Heart left ventricle (tissue), 16 donors: ENCODE measurements at regions of chr7 and their contacts with region 1.

Region 1: GRCh38 chr7:150962553-150963399 is 15.3 kb downstream of the KCNH2 start:
- DNase-seq: peak; percentile 69 to 82 (median 73)
- ATAC-seq: peak; percentile 15 to 64 (median 52)
- H3K4me3 ChIP-seq: no peak overlapping the region
- H3K27ac ChIP-seq: peak overlapping the region; percentile 70 to 96 (median 88)
- H3K4me1 ChIP-seq: peaks cover 0 to 93% (median 34%) of the 10 kb centered on the region in 12 donors
- H3K27me3 ChIP-seq: peaks cover 0 to 40% (median 3%) of the 10 kb centered on the region in 9 donors
- CTCF ChIP-seq: peak; percentile 73 to 90 (median 83)
- POLR2A ChIP-seq: no peak

Region 2: DNA sequence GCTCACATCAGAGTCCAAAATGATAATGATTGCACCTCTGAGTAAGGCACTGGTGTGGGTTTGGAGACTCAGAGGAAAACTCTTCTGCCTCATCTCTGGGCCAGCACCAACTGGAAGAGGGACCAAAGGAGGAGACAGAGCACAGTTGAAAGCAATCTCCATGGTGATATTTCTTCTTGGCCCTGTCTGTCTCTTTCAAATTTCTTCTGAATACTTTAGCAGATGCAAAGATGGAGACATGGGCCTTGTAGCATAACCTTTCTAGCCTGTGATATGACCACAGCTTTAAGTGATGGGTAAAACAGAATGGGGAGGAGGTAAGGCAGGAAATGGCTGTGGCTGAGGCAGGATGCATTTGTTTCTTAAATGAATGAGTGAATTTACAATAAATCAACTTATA is 460.3 kb before region 1 on chr7:
- intact Hi-C with region 1: no loop called
- DNase-seq: no peak
- ATAC-seq: no peak
- H3K4me3 ChIP-seq: no peak overlapping the region
- H3K27ac ChIP-seq: peak overlapping the region in 1 of 12 donors; percentile 61
- H3K4me1 ChIP-seq: peaks cover 0 to 32% (median 8%) of the 10 kb centered on the region in 12 donors
- H3K27me3 ChIP-seq: no peaks in the 10 kb centered on the region
- CTCF ChIP-seq: no peak
- POLR2A ChIP-seq: no peak

Region 3: GRCh38 chr7:150898475-150899011 is 64.2 kb before region 1 on chr7:
- intact Hi-C with region 1: loop called in 5 of 10 experiments (anchors 2 to 10 kb)
- DNase-seq: peak; percentile 67 to 90 (median 80)
- ATAC-seq: peak in 3 of 4 donors; percentile 64 to 80 (median 74)
- H3K4me3 ChIP-seq: no peak overlapping the region
- H3K27ac ChIP-seq: no peak overlapping the region
- H3K4me1 ChIP-seq: peaks cover 0 to 33% (median 4%) of the 10 kb centered on the region in 12 donors
- H3K27me3 ChIP-seq: peaks cover 0 to 38% (median 4%) of the 10 kb centered on the region in 9 donors
- CTCF ChIP-seq: peak; percentile 85 to 96 (median 92)
- POLR2A ChIP-seq: no peak

Region 4: DNA sequence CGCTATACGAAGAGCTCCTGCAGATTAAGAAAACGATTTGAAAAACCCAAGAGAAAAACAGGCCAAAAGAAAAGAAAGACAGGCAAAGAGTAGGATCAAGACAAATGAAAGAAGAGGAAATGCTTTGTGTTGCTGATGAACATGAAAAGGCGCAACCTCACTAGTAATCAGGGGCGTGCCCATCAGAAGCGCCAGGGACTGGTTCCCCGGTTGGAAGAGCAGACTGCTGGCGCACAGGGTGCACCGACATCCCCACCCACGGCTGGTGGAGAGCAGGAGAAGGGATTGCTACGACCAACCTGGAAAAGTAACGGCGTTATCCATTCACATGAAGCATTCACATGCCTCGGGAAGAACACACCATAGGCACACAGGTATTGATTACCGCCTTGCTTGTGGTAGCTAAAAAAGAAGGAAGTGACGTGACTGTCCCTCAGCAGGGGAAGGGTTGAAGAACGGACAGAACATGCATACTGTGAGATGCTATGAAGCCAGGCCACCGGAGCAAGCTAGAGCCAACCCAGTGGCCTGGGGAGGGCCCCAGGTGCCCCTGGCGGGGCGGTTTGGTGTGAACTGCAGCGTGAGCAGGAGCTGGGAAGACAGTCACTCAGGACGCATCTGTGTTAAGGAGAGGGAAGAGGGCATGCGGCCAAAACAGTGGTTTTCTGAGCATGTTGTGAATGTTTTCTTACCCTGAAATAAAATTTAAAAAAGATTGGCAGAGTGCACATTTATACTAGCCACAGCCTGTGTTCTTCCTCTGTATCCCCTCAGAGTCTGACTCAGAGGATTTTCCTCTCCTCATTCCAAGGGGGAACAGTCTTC is 141.8 kb after region 1 on chr7:
- intact Hi-C with region 1: no loop called
- DNase-seq: no peak
- ATAC-seq: no peak
- H3K4me3 ChIP-seq: no peak overlapping the region
- H3K27ac ChIP-seq: no peak overlapping the region
- H3K4me1 ChIP-seq: peaks cover 0 to 27% (median 12%) of the 10 kb centered on the region in 12 donors
- H3K27me3 ChIP-seq: no peaks in the 10 kb centered on the region
- CTCF ChIP-seq: no peak
- POLR2A ChIP-seq: no peak